Dorsolateral prefrontal cortex (tissue), 120 donors: ENCODE measurements at regions of chr2 and their contacts with region 1.

Region 1: DNA sequence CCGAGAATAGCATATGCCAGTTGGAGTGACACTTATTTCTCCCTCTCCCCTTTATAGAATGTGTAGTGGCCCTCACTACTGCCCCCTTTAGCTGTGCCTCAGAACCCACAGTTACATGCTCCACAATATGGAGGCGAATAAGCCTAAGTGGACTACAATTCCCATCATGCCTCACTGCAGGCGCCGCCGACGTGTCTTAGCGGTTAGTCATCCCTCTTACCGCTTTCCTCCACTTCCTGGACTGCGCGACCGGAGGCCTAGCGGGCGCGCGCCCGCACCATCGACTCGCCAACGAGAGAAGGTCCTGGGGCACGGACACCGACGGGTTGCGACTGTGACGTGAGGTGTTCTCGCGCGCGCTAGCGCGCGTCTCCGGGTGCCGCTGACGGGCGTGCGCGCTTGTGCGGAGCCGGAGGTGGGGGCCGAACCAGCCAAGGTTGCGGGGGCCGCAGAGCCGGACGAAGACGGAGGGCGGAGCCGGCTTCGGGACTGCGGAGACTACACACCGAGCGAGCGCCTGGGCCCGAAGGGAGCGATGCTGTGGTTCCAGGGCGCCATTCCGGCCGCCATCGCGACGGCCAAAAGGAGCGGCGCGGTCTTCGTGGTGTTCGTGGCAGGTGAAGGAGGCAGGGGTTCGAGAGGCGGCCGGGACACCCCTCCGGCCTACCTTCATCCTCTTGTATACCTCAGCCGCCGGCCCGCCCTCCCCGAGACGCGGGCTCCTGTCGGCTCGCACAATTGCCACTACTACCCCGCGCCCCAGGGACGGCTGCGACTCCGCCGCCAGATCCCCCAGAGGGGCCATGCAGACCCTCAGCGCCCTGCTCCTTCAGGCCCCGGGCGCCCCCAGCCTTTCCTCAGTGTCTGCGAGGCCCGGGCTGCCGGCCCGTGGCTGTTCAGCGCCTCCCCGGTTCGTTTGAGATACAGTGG is at the start of gene UBXN4:
- DNase-seq: peak; percentile 94 to 99 (median 98)
- H3K4me3 ChIP-seq: peak within 1 kb of the TSS; percentile 62 to 100 (median 94)
- H3K27ac ChIP-seq: peak within 1 kb of the TSS; percentile 83 to 99 (median 98)
- H3K27me3 ChIP-seq: no peaks in the 10 kb centered on the region
- CTCF ChIP-seq: peak in 49 of 56 donors; percentile 13 to 53 (median 38)
- total RNA-seq, gene UBXN4: 67.0 to 134 (median 97.3) TPM

Region 2: GRCh38 chr2:134918526-134919340 is 822.9 kb before region 1 on chr2 and contains the start of gene CCNT2:
- intact Hi-C with region 1: loop called in 1 of 2 experiments (anchors 10 kb)
- DNase-seq: peak; percentile 97 to 100 (median 98)
- H3K4me3 ChIP-seq: peak within 1 kb of the TSS; percentile 60 to 99 (median 93)
- H3K27ac ChIP-seq: peak within 1 kb of the TSS; percentile 85 to 99 (median 97)
- H3K27me3 ChIP-seq: no peaks in the 10 kb centered on the region
- CTCF ChIP-seq: peak in 20 of 56 donors; percentile 7 to 38 (median 22)
- total RNA-seq, gene CCNT2: 37.5 to 74.9 (median 55.2) TPM

Region 3: DNA sequence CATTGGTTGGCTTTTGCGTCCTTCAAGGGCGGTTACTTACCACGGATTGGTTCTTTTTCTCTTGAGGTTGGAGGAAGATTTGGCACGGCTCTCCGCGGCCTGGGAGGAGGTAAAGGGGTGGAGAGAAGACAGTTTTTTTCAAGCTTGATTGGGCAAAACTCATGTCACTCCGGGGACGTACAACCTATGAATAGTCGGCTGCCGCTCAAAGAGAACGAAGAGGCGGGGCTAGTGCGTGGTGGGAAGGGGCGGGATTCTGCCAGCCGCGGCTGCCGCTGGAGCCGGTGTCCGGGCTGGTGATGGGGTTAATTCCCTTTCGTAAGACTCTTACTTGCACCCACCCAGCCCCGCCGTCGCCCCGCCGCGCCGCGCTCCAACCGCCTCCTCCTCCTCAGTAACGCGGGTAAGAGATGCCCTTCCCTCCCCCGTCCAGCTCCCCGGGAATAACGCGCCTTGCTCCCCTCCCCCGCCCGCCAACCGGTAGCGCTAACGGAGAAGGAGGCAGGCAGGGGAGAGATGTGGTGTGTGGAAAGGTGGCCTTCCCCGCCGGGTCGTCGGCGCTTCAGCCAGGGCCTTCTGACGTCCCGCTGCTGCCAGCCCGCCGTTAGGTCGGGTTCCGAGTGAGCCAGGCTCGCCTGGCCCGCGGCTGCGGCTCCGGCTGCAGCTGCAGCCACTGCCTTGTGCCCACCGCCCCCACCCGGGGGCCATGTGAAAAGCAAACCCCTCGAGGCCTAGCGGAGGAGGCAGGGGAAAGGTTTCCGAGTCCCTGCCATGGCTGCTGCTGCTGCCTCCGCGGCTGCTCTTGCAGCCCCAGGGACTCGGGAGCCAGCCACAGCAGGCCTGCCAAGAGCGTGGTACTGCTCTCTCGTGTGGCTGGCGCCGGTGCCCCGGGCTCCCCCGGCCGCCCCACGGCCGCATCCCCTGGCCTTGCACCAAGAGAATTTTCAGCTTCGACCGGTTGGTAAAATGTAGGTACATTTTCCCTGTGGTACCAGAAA is 210.1 kb before region 1 on chr2 and contains the start of gene R3HDM1:
- intact Hi-C with region 1: loop called in 1 of 2 experiments (anchors 2 kb)
- DNase-seq: peak; percentile 83 to 99 (median 98)
- H3K4me3 ChIP-seq: peak within 1 kb of the TSS; percentile 65 to 99 (median 90)
- H3K27ac ChIP-seq: peak within 1 kb of the TSS; percentile 81 to 99 (median 96)
- H3K27me3 ChIP-seq: no peaks in the 10 kb centered on the region
- CTCF ChIP-seq: peak in 16 of 56 donors; percentile 2 to 46 (median 16)
- total RNA-seq, gene R3HDM1: 78.4 to 359 (median 235) TPM

Region 4: GRCh38 chr2:135709992-135710391 is 31.7 kb before region 1 on chr2:
- intact Hi-C with region 1: loop called in 1 of 2 experiments (anchors 2 kb)
- DNase-seq: peak; percentile 42 to 80 (median 68)
- H3K4me3 ChIP-seq: no peak overlapping the region
- H3K27ac ChIP-seq: peak overlapping the region in 7 of 59 donors; percentile 8 to 50 (median 25)
- H3K27me3 ChIP-seq: no peaks in the 10 kb centered on the region
- CTCF ChIP-seq: peak; percentile 88 to 100 (median 98)

Region 5: GRCh38 chr2:135876066-135876711 is 134.5 kb after region 1 on chr2 and contains the start of gene MCM6:
- intact Hi-C with region 1: loop called in 1 of 2 experiments (anchors 5 kb)
- DNase-seq: peak; percentile 90 to 98 (median 96)
- H3K4me3 ChIP-seq: peak within 1 kb of the TSS; percentile 63 to 91 (median 81)
- H3K27ac ChIP-seq: peak within 1 kb of the TSS in 53 of 59 donors; percentile 13 to 89 (median 71)
- H3K27me3 ChIP-seq: no peaks in the 10 kb centered on the region
- CTCF ChIP-seq: peak in 35 of 56 donors; percentile 11 to 58 (median 33)
- total RNA-seq, gene MCM6: 6.7 to 22.6 (median 12.2) TPM